Activated CD4-positive, alpha-beta T cell treated with anti-CD3 and anti-CD28 coated beads for 36 hours (primary cell): ENCODE measurements at regions of chr12 and their contacts with region 1.

Region 1: DNA sequence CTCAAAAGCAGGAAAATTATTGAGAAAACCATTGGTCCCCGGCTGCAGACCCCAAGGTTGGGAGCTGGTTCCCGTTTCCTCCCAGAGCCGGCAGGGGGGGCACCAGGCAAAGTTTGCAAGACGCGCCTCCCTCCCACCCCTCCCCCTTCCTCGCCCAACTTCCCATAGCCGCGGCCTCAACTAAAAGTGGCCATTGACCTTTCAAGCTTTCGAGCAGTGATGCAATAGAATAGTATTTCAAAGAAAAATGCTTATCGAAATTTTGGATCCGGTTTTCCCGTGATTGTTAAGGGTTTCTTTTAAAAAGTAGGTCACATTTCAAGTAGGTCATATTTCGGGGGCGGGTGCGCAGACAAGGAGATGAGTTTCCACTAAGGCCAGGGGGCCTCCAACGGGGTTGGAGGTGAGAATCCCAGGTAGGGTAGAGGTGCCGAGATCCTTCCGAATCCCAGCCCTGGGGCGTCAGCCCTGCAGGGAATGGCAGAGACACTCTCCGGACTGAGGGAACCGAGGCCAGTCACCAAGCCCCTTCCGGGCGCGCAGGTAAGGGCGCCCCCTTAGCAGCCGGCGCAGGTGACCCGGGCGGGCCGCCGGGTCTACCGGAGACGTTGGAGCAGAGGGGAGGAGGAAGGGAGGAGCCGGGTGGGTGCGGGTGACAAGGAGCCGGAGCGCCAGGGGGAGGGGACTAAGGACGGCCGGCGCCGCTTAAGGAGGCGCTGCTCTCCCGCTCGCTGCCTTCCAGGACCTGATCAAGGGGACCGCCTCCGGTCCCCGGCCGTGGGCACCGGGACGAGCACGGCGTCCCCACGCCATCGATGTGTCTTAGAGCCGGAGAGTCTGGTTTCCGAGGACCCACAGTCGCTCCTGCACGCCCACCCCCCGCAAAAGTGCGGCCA is 2.6 kb upstream of the SOCS2 start:
- DNase-seq: peak; percentile 88
- ATAC-seq: peak; percentile 67
- H3K4me3 Mint-ChIP-seq: peak overlapping the region; percentile 82
- H3K27ac Mint-ChIP-seq: peak overlapping the region; percentile 75
- H3K4me1 Mint-ChIP-seq: peaks cover 16% of the 10 kb centered on the region
- H3K27me3 Mint-ChIP-seq: peaks cover 23% of the 10 kb centered on the region

Region 2: DNA sequence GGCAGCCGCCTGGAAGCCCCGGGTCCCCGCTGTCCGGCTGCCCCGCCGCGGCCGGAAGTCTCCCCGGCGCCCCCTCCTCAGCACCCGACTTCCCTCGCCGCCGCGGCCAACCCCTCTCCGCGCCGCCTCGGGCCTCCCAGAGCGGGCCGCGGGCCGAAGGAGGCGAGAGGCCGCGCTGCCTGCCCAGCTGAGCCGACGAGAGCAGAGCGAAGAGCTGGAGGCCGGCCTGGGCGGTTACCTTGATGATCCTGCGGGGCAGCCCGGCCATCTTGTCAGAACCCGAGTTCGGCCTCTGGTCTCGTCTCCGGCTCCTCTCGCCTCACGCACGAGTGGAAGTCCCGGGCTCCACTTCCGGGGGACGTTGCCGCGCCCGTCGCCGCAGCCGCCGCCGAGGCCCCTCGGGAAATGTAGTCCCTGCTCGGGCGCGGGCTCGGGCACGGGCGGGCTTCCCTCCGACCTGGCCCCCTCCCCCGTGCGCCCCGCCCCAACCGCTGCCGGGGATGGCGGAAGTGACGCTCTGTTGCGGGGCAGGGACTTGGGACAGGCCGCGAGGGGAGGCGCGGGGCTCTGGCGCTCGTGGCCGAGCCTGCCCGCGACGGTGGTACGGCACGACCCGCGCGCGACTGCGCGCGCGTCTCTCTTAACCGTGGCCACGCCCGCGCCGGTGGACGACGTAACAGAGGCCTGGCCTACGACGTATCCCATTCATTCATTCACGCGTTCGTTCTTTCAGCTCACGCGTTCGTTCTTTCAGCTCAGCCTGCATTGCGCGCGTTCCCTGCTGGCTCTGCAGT is 128.1 kb before region 1 on chr12 and contains the start of gene UBE2N:
- CTCF ChIA-PET with region 1: no interaction called
- POLR2A ChIA-PET with region 1: no interaction called
- intact Hi-C with region 1: loop called (anchors 1 kb)
- DNase-seq: peak; percentile 98
- ATAC-seq: peak; percentile 84
- H3K4me3 Mint-ChIP-seq: peak within 1 kb of the TSS; percentile 99
- H3K27ac Mint-ChIP-seq: peak within 1 kb of the TSS; percentile 99
- H3K4me1 Mint-ChIP-seq: peaks cover 48% of the 10 kb centered on the region
- H3K27me3 Mint-ChIP-seq: no peaks in the 10 kb centered on the region
- total RNA-seq, gene UBE2N: 186 to 279 TPM

Region 3: GRCh38 chr12:93591137-93591868 is 21.4 kb after region 1 on chr12:
- CTCF ChIA-PET with region 1: interaction called, 7 read pairs
- POLR2A ChIA-PET with region 1: interaction called, 3 read pairs
- intact Hi-C with region 1: loop called in 1 of 2 experiments (anchors 1 kb)
- DNase-seq: peak; percentile 54
- ATAC-seq: peak; percentile 75
- H3K4me3 Mint-ChIP-seq: peak overlapping the region; percentile 75
- H3K27ac Mint-ChIP-seq: peak overlapping the region; percentile 1
- H3K4me1 Mint-ChIP-seq: peaks cover 7% of the 10 kb centered on the region
- H3K27me3 Mint-ChIP-seq: peaks cover 53% of the 10 kb centered on the region

Region 4: GRCh38 chr12:93766796-93767523 is 197.1 kb after region 1 on chr12:
- CTCF ChIA-PET with region 1: interaction called, 4 read pairs
- POLR2A ChIA-PET with region 1: no interaction called
- intact Hi-C with region 1: loop called (anchors 1 to 2 kb)
- DNase-seq: peak; percentile 54
- ATAC-seq: peak; percentile 75
- H3K4me3 Mint-ChIP-seq: no peak overlapping the region
- H3K27ac Mint-ChIP-seq: no peak overlapping the region
- H3K4me1 Mint-ChIP-seq: peaks cover 22% of the 10 kb centered on the region
- H3K27me3 Mint-ChIP-seq: no peaks in the 10 kb centered on the region

Region 5: DNA sequence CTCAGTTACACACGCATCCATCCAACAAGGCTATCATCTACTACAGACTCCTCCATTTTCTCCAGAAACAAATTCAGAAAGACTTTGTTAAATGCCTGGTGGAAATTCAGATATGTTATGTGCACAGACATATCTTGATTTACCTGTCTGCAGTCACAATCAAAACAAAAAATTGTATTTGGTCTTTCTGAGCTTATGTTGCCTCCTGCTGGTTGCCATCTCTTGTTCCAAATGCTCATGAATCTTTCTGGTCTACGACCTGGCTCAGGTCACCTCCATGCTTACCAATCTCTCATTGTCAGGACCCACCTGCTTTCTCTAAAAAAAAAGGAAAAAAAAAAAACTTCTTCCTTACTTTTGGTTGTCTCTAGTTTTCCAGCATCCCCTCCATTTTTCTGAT is 409.3 kb after region 1 on chr12:
- CTCF ChIA-PET with region 1: interaction called, 6 read pairs
- POLR2A ChIA-PET with region 1: no interaction called
- intact Hi-C with region 1: loop called (anchors 1 to 5 kb)
- DNase-seq: peak; percentile 43
- ATAC-seq: no peak
- H3K4me3 Mint-ChIP-seq: no peak overlapping the region
- H3K27ac Mint-ChIP-seq: no peak overlapping the region
- H3K4me1 Mint-ChIP-seq: peaks cover 22% of the 10 kb centered on the region
- H3K27me3 Mint-ChIP-seq: peaks cover 12% of the 10 kb centered on the region

Region 6: DNA sequence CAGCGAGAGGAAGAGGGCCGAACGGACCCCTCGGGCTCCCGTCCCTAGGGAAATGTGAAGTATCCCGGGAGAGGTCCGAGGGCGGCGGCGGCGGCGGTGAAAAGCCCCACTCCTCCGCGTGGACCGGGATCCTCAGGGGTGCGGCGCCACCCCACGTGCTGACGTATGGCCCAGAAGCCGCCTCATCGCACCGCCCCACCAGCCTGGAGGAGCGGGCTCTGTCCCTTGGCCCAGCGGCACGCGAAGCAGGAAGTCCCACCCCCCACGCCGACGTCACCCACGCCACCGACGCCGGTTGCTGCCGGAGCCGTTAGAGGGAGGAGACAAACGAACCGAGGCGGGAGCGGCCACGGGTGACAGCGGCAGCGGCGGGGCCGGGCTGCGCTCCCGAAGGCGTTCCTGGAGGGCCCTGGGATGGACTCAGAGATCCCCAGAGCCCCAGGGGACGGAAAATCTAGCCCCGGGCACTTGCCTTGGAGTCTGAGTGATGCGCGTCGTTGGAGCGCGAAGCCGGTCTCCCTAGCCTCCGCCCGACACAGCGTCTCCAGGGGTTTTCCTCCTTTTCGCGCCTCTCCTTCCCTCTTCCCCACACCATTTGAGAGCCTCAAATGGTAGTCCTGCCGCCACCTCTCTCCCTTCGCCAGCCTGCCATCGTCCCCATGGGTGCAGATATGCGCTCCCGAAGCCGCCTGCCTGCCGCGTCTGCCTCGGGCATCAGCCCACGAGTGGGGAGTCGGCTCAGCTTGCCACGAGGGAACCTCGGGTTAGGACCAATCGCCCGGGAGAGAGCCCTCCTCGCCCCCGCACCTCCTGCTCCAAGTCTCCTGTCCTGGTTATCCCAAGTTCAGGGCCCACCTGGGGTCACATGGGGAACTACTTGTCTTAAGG is 890.1 kb after region 1 on chr12 and contains the start of gene CEP83:
- CTCF ChIA-PET with region 1: no interaction called
- POLR2A ChIA-PET with region 1: no interaction called
- intact Hi-C with region 1: loop called in 1 of 2 experiments (anchors 2 kb)
- DNase-seq: peak; percentile 98
- ATAC-seq: peak; percentile 99
- H3K4me3 Mint-ChIP-seq: peak within 1 kb of the TSS; percentile 96
- H3K27ac Mint-ChIP-seq: peak within 1 kb of the TSS; percentile 95
- H3K4me1 Mint-ChIP-seq: peaks cover 30% of the 10 kb centered on the region
- H3K27me3 Mint-ChIP-seq: peaks cover 10% of the 10 kb centered on the region
- total RNA-seq, gene CEP83: 21.9 to 22.6 TPM